ENCODE measurements at regions of chr4 and their contacts with region 1.

Region 1: DNA sequence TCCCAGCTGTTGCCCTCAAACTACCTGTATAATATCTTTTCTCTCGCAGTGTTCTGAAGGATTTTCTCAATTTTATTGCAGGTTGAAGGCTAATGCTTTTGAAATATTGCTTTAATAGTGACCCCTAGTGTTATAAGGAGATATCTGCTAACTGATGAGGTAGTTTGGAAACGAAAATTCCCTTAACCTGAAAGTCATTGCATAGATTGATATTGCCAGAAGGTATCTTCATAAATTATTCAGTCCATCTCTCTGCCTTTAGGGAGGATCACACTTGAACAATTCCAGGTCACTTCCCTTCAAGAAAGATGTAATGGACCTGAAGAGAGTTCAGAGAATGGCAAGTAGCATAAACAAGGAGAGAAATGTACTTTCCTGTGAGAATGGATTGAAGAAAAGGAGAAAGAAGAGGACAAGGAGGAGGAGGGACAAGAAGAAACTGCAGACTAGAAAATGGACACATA is 44.1 kb downstream of the TIGD4 start:
- DNase-seq: peak in 3 of 14 experiments; percentile 41 to 45 (median 44)
- ATAC-seq: no peak
- H3K4me3 ChIP-seq: no peak overlapping the region
- H3K4me3 Mint-ChIP-seq: no peak overlapping the region
- H3K27ac ChIP-seq: no peak overlapping the region
- H3K27ac Mint-ChIP-seq: no peak overlapping the region
- H3K4me1 ChIP-seq: no peaks in the 10 kb centered on the region
- H3K4me1 Mint-ChIP-seq: no peaks in the 10 kb centered on the region
- H3K27me3 ChIP-seq: no peaks in the 10 kb centered on the region
- H3K27me3 Mint-ChIP-seq: peaks cover 3% of the 10 kb centered on the region
- CTCF ChIP-seq: peak; percentile 74

Region 2: GRCh38 chr4:151117371-151117962 is 1618.0 kb before region 1 on chr4:
- CTCF ChIA-PET with region 1: no interaction called
- POLR2A ChIA-PET with region 1: no interaction called
- intact Hi-C with region 1: loop called in 1 of 2 experiments (anchors 5 kb)
- DNase-seq: peak; percentile 16 to 68 (median 41)
- ATAC-seq: peak; percentile 86
- H3K4me3 ChIP-seq: no peak overlapping the region
- H3K4me3 Mint-ChIP-seq: no peak overlapping the region
- H3K27ac ChIP-seq: no peak overlapping the region
- H3K27ac Mint-ChIP-seq: no peak overlapping the region
- H3K4me1 ChIP-seq: no peaks in the 10 kb centered on the region
- H3K4me1 Mint-ChIP-seq: peaks cover 7% of the 10 kb centered on the region
- H3K27me3 ChIP-seq: no peaks in the 10 kb centered on the region
- H3K27me3 Mint-ChIP-seq: no peaks in the 10 kb centered on the region
- CTCF ChIP-seq: peak; percentile 67

Region 3: GRCh38 chr4:151614561-151614960 is 1120.9 kb before region 1 on chr4:
- CTCF ChIA-PET with region 1: no interaction called
- POLR2A ChIA-PET with region 1: no interaction called
- intact Hi-C with region 1: no loop called
- DNase-seq: no peak
- ATAC-seq: no peak
- H3K4me3 ChIP-seq: no peak overlapping the region
- H3K4me3 Mint-ChIP-seq: no peak overlapping the region
- H3K27ac ChIP-seq: no peak overlapping the region
- H3K27ac Mint-ChIP-seq: no peak overlapping the region
- H3K4me1 ChIP-seq: no peaks in the 10 kb centered on the region
- H3K4me1 Mint-ChIP-seq: no peaks in the 10 kb centered on the region
- H3K27me3 ChIP-seq: no peaks in the 10 kb centered on the region
- H3K27me3 Mint-ChIP-seq: peaks cover 14% of the 10 kb centered on the region
- CTCF ChIP-seq: no peak

Region 4: GRCh38 chr4:152408514-152409327 is 326.7 kb before region 1 on chr4:
- CTCF ChIA-PET with region 1: interaction called, 3 read pairs
- POLR2A ChIA-PET with region 1: no interaction called
- intact Hi-C with region 1: loop called in 1 of 2 experiments (anchors 5 kb)
- DNase-seq: peak in 4 of 14 experiments; percentile 11 to 67 (median 62)
- ATAC-seq: peak; percentile 46
- H3K4me3 ChIP-seq: no peak overlapping the region
- H3K4me3 Mint-ChIP-seq: no peak overlapping the region
- H3K27ac ChIP-seq: no peak overlapping the region
- H3K27ac Mint-ChIP-seq: no peak overlapping the region
- H3K4me1 ChIP-seq: no peaks in the 10 kb centered on the region
- H3K4me1 Mint-ChIP-seq: peaks cover 26% of the 10 kb centered on the region
- H3K27me3 ChIP-seq: no peaks in the 10 kb centered on the region
- H3K27me3 Mint-ChIP-seq: no peaks in the 10 kb centered on the region
- CTCF ChIP-seq: peak; percentile 64

Region 5: DNA sequence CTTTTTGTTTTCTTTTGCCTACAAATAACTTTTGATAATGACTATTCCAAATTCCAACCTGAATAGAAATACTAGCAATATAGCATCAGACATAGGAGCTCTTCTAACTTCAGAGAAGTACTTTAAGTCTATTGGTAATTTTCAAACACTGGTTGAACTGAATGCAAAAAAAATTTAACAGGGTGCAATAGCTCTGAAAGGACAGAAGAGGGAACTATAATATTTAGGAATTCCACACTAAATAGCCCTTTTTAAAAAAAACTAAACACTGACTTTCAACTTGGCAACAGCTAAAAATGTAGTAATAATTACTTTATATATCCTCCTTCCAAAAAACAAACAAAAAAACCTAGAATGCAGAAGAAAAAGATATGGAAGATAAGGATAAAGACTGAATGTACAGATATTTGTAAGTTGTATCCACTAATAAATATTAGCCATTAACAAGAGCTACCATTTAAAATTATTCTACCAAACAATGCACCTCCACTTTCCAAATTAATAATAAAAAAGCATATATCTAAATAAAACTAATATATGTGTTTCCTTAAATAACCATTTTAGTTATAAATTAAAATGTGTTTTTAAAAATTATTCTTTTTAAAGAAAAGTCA is 280.9 kb before region 1 on chr4:
- CTCF ChIA-PET with region 1: no interaction called
- POLR2A ChIA-PET with region 1: no interaction called
- intact Hi-C with region 1: loop called in 1 of 2 experiments (anchors 1 kb)
- DNase-seq: peak in 2 of 14 experiments; percentile 17 to 35
- ATAC-seq: peak; percentile 37
- H3K4me3 ChIP-seq: no peak overlapping the region
- H3K4me3 Mint-ChIP-seq: no peak overlapping the region
- H3K27ac ChIP-seq: no peak overlapping the region
- H3K27ac Mint-ChIP-seq: no peak overlapping the region
- H3K4me1 ChIP-seq: no peaks in the 10 kb centered on the region
- H3K4me1 Mint-ChIP-seq: peaks cover 48% of the 10 kb centered on the region
- H3K27me3 ChIP-seq: no peaks in the 10 kb centered on the region
- H3K27me3 Mint-ChIP-seq: no peaks in the 10 kb centered on the region
- CTCF ChIP-seq: peak; percentile 61

Region 6: DNA sequence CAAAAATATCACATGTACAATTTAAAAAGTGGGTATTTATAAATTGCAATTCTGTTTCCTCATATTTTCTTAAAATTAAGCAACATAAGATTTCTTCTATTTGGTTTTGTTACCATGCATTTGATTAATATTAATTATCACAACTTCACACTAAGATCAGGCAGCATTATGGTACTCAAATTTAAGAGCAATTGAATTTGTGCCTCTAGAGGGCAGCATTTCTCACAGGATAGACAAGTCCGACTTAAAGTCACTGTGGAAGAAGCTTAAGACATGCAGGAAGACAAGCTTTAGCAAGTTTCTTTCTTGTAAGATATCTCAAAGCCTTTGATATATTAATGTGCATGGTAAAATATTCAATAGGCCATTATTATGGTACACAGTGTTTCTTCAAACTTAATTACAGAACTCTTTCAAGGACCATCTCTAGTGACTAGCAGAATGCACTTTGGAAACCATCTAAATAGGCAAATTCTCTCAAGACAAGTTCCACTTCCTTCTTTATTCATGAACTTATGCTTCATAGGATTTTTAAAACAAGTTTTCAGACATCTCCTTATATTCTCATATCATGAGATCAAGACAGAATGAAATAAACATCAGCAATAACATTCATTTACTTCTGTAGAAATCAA is 234.5 kb before region 1 on chr4:
- CTCF ChIA-PET with region 1: interaction called, 3 read pairs
- POLR2A ChIA-PET with region 1: interaction called, 7 read pairs
- intact Hi-C with region 1: loop called (anchors 1 kb)
- DNase-seq: peak in 10 of 14 experiments; percentile 22 to 90 (median 56)
- ATAC-seq: peak; percentile 85
- H3K4me3 ChIP-seq: no peak overlapping the region
- H3K4me3 Mint-ChIP-seq: no peak overlapping the region
- H3K27ac ChIP-seq: no peak overlapping the region
- H3K27ac Mint-ChIP-seq: no peak overlapping the region
- H3K4me1 ChIP-seq: peaks cover 3% of the 10 kb centered on the region
- H3K4me1 Mint-ChIP-seq: peaks cover 40% of the 10 kb centered on the region
- H3K27me3 ChIP-seq: no peaks in the 10 kb centered on the region
- H3K27me3 Mint-ChIP-seq: no peaks in the 10 kb centered on the region
- CTCF ChIP-seq: peak; percentile 84

Region 7: GRCh38 chr4:152640058-152640833 is 95.2 kb before region 1 on chr4:
- CTCF ChIA-PET with region 1: no interaction called
- POLR2A ChIA-PET with region 1: no interaction called
- intact Hi-C with region 1: loop called in 1 of 2 experiments (anchors 5 kb)
- DNase-seq: peak in 3 of 14 experiments; percentile 39 to 47 (median 41)
- ATAC-seq: peak; percentile 56
- H3K4me3 ChIP-seq: no peak overlapping the region
- H3K4me3 Mint-ChIP-seq: no peak overlapping the region
- H3K27ac ChIP-seq: no peak overlapping the region
- H3K27ac Mint-ChIP-seq: no peak overlapping the region
- H3K4me1 ChIP-seq: peaks cover 16% of the 10 kb centered on the region
- H3K4me1 Mint-ChIP-seq: peaks cover 22% of the 10 kb centered on the region
- H3K27me3 ChIP-seq: no peaks in the 10 kb centered on the region
- H3K27me3 Mint-ChIP-seq: no peaks in the 10 kb centered on the region
- CTCF ChIP-seq: peak; percentile 87